Activated naive CD4-positive, alpha-beta T cell treated with anti-CD3 and anti-CD28 coated beads for 36 hours (primary cell): ENCODE measurements at regions of chr6 and their contacts with region 1.

Region 1: DNA sequence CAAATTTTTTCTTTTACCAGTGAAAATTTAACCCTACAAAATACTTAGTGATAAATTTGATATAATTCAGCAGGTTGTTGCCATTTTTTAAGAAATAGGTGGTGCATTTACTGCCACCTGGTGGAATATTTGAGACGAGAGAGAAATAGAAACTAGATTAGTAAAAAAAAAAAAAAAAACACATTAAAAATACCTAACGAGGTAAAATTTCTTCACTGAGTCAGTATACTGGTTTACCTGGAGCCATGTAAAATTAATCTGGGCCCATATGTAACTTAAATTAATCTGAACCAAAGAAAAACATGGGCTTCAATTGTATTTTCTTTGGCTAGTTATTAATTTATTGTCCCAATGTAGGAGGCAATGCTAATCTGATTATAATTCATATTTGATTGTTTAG is 520.8 kb downstream of the EPM2A start:
- DNase-seq: no peak
- H3K4me3 Mint-ChIP-seq: no peak overlapping the region
- H3K27ac Mint-ChIP-seq: no peak overlapping the region
- H3K4me1 Mint-ChIP-seq: peaks cover 7% of the 10 kb centered on the region
- H3K27me3 Mint-ChIP-seq: peaks cover 6% of the 10 kb centered on the region

Region 2: GRCh38 chr6:144104898-144105487 is 1109.6 kb before region 1 on chr6:
- CTCF ChIA-PET with region 1: no interaction called
- intact Hi-C with region 1: loop called (anchors 10 kb)
- DNase-seq: peak; percentile 48
- H3K4me3 Mint-ChIP-seq: no peak overlapping the region
- H3K27ac Mint-ChIP-seq: no peak overlapping the region
- H3K4me1 Mint-ChIP-seq: peaks cover 11% of the 10 kb centered on the region
- H3K27me3 Mint-ChIP-seq: no peaks in the 10 kb centered on the region

Region 3: DNA sequence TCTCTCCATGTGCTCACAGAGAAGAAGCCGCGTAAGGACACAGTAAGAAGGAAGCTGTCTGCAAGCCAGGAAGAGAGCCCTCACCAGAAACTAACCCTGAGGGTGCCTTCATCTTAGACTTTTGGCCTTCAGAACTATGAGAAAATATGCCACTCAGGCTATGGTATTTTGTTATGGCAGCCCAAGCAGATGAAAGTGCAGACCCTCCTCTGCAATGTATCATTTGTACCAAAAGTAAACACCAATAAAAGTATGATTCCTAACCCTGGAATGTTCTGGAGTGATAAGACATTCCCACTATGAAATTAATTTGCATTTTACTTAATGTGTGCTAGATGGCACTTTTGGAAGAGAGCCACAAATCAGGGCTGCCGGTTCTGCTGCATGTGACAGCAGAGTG is 335.1 kb before region 1 on chr6:
- CTCF ChIA-PET with region 1: no interaction called
- intact Hi-C with region 1: no loop called
- DNase-seq: no peak
- H3K4me3 Mint-ChIP-seq: no peak overlapping the region
- H3K27ac Mint-ChIP-seq: no peak overlapping the region
- H3K4me1 Mint-ChIP-seq: no peaks in the 10 kb centered on the region
- H3K27me3 Mint-ChIP-seq: peaks cover 22% of the 10 kb centered on the region

Region 4: GRCh38 chr6:144953552-144954240 is 260.9 kb before region 1 on chr6:
- CTCF ChIA-PET with region 1: no interaction called
- intact Hi-C with region 1: loop called (anchors 5 kb)
- DNase-seq: no peak
- H3K4me3 Mint-ChIP-seq: no peak overlapping the region
- H3K27ac Mint-ChIP-seq: no peak overlapping the region
- H3K4me1 Mint-ChIP-seq: no peaks in the 10 kb centered on the region
- H3K27me3 Mint-ChIP-seq: no peaks in the 10 kb centered on the region

Region 5: DNA sequence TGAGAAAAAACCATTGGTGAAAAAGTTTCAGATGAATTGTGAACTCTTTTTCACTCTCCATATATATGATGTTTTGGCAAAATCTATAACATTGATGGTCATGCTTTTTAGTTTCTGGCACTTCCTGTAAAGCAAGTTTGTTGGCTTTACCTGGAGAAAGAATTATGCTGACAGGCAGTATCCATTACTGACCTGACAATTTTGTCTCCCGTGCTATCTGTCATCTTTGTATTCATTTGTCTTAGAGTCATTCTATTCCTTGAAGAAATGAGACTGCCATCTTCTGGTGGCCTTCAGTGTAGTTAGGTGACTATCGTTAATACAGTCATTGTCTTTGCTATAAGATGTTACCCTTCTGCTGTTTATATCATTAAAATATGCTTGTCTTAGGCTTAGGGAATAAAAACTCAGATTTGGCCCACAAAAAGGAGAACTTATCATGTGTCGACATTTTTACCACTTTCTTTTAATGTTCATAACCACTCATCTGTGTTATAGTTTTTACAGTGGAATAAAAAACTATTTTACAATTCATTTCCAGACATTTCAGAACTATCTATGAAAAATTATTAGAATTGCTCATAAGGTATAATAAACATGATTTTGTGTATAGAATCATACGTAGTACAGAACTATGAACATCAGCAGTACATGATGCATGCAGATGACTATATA is 186.3 kb before region 1 on chr6:
- CTCF ChIA-PET with region 1: no interaction called
- intact Hi-C with region 1: loop called (anchors 10 kb)
- DNase-seq: peak; percentile 38
- H3K4me3 Mint-ChIP-seq: no peak overlapping the region
- H3K27ac Mint-ChIP-seq: no peak overlapping the region
- H3K4me1 Mint-ChIP-seq: no peaks in the 10 kb centered on the region
- H3K27me3 Mint-ChIP-seq: peaks cover 24% of the 10 kb centered on the region

Region 6: DNA sequence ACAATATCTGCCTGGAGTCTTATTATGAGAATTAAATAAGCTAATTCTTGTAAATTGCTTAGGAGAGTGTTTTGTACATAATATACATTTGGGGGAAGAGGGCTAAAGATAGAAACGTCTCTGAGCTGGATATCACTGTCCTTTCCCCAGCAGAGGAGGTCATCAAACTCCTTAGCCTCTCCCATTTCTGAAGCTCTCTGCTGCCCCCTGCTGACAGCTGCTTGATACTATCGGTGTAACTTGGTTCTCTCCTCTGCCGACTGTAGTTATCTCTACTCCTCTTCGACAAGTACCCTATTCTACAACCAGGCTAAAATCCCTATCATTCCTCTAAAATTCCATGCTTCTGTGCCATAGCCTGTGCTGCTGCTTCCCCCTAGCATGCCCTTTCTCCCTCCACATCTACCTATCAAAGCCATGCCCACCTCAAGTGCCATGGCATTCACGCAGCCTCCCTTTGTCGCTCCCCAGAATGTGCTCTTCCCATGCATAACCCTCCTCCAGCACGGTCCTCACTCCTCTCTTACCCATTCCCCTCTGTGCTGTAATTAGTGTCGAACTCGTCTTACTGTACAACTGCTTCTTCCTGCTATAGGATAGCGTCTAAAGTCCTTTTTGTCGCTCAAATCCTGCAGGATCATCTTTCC is 419.5 kb after region 1 on chr6:
- CTCF ChIA-PET with region 1: no interaction called
- intact Hi-C with region 1: loop called (anchors 5 kb)
- DNase-seq: peak; percentile 91
- H3K4me3 Mint-ChIP-seq: no peak overlapping the region
- H3K27ac Mint-ChIP-seq: no peak overlapping the region
- H3K4me1 Mint-ChIP-seq: peaks cover 5% of the 10 kb centered on the region
- H3K27me3 Mint-ChIP-seq: no peaks in the 10 kb centered on the region